Mammary epithelial cell (primary cell): ENCODE measurements at regions of chr19 and their contacts with region 1.

Region 1: GRCh38 chr19:33241530-33242101 is 16.0 kb upstream of the SLC7A10 start:
- DNase-seq: peak; percentile 46
- H3K4me3 ChIP-seq: no peak overlapping the region
- H3K27ac ChIP-seq: no peak overlapping the region
- H3K4me1 ChIP-seq: peaks cover 10% of the 10 kb centered on the region
- H3K27me3 ChIP-seq: no peaks in the 10 kb centered on the region
- CTCF ChIP-seq: peak; percentile 25 to 70

Region 2: GRCh38 chr19:33176670-33177416 is 64.8 kb before region 1 on chr19:
- CTCF ChIA-PET with region 1: no interaction called
- dilution Hi-C with region 1: loop called (anchors 5 kb)
- in situ Hi-C with region 1: no loop called
- intact Hi-C with region 1: no loop called
- DNase-seq: peak; percentile 98
- H3K4me3 ChIP-seq: peak overlapping the region; percentile 56 to 80 (median 68)
- H3K27ac ChIP-seq: peak overlapping the region; percentile 74
- H3K4me1 ChIP-seq: peaks cover 18% of the 10 kb centered on the region
- H3K27me3 ChIP-seq: no peaks in the 10 kb centered on the region
- CTCF ChIP-seq: peak in 1 of 2 donors; percentile 20

Region 3: GRCh38 chr19:33280351-33280921 is 38.8 kb after region 1 on chr19:
- CTCF ChIA-PET with region 1: no interaction called
- dilution Hi-C with region 1: no loop called
- in situ Hi-C with region 1: no loop called
- intact Hi-C with region 1: no loop called
- DNase-seq: no peak
- H3K4me3 ChIP-seq: no peak overlapping the region
- H3K27ac ChIP-seq: no peak overlapping the region
- H3K4me1 ChIP-seq: no peaks in the 10 kb centered on the region
- H3K27me3 ChIP-seq: no peaks in the 10 kb centered on the region
- CTCF ChIP-seq: no peak

Region 4: DNA sequence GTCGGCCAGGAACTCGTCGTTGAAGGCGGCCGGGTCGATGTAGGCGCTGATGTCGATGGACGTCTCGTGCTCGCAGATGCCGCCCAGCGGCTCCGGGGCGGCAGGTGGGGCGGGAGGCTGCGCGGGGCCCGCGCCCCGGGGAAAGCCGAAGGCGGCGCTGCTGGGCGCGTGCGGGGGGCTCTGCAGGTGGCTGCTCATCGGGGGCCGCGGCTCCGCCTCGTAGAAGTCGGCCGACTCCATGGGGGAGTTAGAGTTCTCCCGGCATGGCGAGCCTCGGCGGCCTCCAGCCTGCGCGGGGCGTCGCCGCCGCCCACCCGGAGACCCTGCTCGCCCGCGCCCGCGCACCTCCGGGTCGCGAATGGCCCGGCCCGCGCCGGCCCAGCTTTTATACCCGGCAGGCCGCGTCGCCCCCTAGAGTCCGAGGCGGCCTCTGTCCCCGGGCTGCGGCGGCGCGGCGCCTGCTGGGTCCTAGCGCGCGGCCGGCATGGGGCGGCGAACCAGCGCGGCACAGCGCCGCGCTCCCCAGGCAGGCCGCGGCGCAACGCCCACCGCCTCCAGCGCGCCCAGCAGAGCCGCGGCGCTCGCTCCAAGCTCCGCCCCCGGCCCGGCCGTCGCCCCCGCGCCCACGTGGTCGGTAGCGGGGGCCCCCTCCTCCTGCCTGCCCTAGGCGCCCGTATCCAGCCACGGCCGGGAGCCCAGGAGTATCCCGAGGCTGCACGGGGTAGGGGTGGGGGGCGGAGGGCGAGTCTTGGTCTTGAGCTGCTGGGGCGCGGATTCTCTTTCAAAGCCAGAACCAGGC is 60.8 kb after region 1 on chr19 and contains the start of gene CEBPA:
- CTCF ChIA-PET with region 1: no interaction called
- dilution Hi-C with region 1: no loop called
- in situ Hi-C with region 1: no loop called
- intact Hi-C with region 1: loop called (anchors 1 kb)
- DNase-seq: peak; percentile 78
- H3K4me3 ChIP-seq: peak within 1 kb of the TSS; percentile 66 to 71 (median 67)
- H3K27ac ChIP-seq: no peak within 1 kb of the TSS
- H3K4me1 ChIP-seq: peaks cover 45% of the 10 kb centered on the region
- H3K27me3 ChIP-seq: peaks cover 10% of the 10 kb centered on the region
- CTCF ChIP-seq: peak; percentile 34 to 53
- total RNA-seq, gene CEBPA: 2.8 to 3.3 TPM